Activated CD4-positive, alpha-beta memory T cell treated with anti-CD3 and anti-CD28 coated beads for 36 hours (primary cell): ENCODE measurements at regions of chr14 and their contacts with region 1.

Region 1: GRCh38 chr14:49892636-49893308 is at the start of gene ARF6:
- DNase-seq: peak; percentile 98
- H3K4me3 Mint-ChIP-seq: peak within 1 kb of the TSS; percentile 90
- H3K27ac Mint-ChIP-seq: peak within 1 kb of the TSS; percentile 93
- H3K4me1 Mint-ChIP-seq: peaks cover 18% of the 10 kb centered on the region
- H3K27me3 Mint-ChIP-seq: no peaks in the 10 kb centered on the region
- total RNA-seq, gene ARF6: 198 to 202 TPM

Region 2: DNA sequence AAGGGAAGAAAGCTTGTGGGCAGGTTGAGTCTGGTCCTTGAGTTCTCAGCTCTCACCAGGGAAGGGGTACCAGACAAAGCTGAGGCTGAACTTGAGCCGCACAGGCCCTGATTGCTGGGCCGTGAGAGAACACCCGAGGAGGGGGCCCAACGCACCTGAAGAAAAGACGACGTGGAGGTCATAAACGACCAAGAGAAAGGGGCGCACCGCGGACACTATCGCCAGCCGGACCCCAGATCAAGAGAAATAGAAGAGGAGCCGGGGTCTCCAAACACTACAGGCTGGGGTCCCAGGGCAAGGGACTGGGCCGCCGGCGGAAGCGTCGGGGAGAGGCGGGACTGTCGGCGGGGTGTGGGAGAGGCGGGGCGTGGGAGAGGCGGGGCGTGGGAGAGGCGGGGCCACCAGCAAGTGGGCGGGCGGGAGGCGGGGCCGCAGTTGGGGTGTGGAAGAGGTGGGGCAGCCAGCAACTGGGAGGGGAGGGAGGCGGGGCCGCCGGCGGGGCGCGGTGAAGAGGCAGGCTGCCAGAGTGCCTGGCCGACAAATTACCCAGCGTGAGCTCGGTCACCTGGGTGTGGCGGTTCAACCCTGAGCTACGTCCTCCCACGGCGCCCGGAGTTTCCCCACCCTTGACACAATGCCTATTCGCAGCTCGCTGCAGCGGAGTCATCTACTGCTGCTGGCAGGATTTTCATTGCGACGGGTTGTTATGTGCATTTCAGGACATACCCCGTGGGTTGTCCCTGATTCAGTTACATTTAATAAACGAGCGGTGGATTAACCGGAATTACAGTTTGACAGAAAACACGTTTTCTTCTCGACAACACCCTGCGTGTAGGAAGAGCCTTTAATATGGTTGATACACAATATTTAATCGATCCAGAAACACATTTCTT is 24.7 kb before region 1 on chr14:
- CTCF ChIA-PET with region 1: interaction called, 14 read pairs
- POLR2A ChIA-PET with region 1: interaction called, 55 read pairs
- intact Hi-C with region 1: loop called (anchors 1 kb)
- DNase-seq: peak; percentile 99
- H3K4me3 Mint-ChIP-seq: peak overlapping the region; percentile 94
- H3K27ac Mint-ChIP-seq: peak overlapping the region; percentile 85
- H3K4me1 Mint-ChIP-seq: peaks cover 25% of the 10 kb centered on the region
- H3K27me3 Mint-ChIP-seq: no peaks in the 10 kb centered on the region

Region 3: GRCh38 chr14:49982501-49982951 is 89.8 kb after region 1 on chr14:
- CTCF ChIA-PET with region 1: no interaction called
- POLR2A ChIA-PET with region 1: interaction called, 4 read pairs
- intact Hi-C with region 1: loop called (anchors 1 kb)
- DNase-seq: peak; percentile 44
- H3K4me3 Mint-ChIP-seq: peak overlapping the region; percentile 54
- H3K27ac Mint-ChIP-seq: peak overlapping the region; percentile 82
- H3K4me1 Mint-ChIP-seq: peaks cover 81% of the 10 kb centered on the region
- H3K27me3 Mint-ChIP-seq: no peaks in the 10 kb centered on the region

Region 4: GRCh38 chr14:50085570-50086320 is 193.0 kb after region 1 on chr14:
- CTCF ChIA-PET with region 1: interaction called, 4 read pairs
- POLR2A ChIA-PET with region 1: interaction called, 15 read pairs
- intact Hi-C with region 1: loop called (anchors 1 kb)
- DNase-seq: peak; percentile 70
- H3K4me3 Mint-ChIP-seq: peak overlapping the region; percentile 30
- H3K27ac Mint-ChIP-seq: peak overlapping the region; percentile 91
- H3K4me1 Mint-ChIP-seq: peaks cover 92% of the 10 kb centered on the region
- H3K27me3 Mint-ChIP-seq: no peaks in the 10 kb centered on the region

Region 5: GRCh38 chr14:50231475-50232275 is 338.9 kb after region 1 on chr14 and contains the start of gene SOS2:
- CTCF ChIA-PET with region 1: no interaction called
- POLR2A ChIA-PET with region 1: no interaction called
- intact Hi-C with region 1: loop called (anchors 2 kb)
- DNase-seq: peak; percentile 86
- H3K4me3 Mint-ChIP-seq: peak within 1 kb of the TSS; percentile 78
- H3K27ac Mint-ChIP-seq: peak within 1 kb of the TSS; percentile 85
- H3K4me1 Mint-ChIP-seq: peaks cover 40% of the 10 kb centered on the region
- H3K27me3 Mint-ChIP-seq: no peaks in the 10 kb centered on the region
- total RNA-seq, gene SOS2: 19.6 to 20.9 TPM

Region 6: GRCh38 chr14:50272503-50272902 is 379.7 kb after region 1 on chr14:
- CTCF ChIA-PET with region 1: no interaction called
- POLR2A ChIA-PET with region 1: no interaction called
- intact Hi-C with region 1: no loop called
- DNase-seq: no peak
- H3K4me3 Mint-ChIP-seq: no peak overlapping the region
- H3K27ac Mint-ChIP-seq: no peak overlapping the region
- H3K4me1 Mint-ChIP-seq: no peaks in the 10 kb centered on the region
- H3K27me3 Mint-ChIP-seq: no peaks in the 10 kb centered on the region